ENCODE measurements at regions of chr10 and their contacts with region 1.

Region 1: GRCh38 chr10:121260376-121260775 is 337.9 kb downstream of the FGFR2 start:
- DNase-seq: no peak
- H3K4me3 ChIP-seq: no peak overlapping the region
- CTCF ChIP-seq: no peak

Region 2: DNA sequence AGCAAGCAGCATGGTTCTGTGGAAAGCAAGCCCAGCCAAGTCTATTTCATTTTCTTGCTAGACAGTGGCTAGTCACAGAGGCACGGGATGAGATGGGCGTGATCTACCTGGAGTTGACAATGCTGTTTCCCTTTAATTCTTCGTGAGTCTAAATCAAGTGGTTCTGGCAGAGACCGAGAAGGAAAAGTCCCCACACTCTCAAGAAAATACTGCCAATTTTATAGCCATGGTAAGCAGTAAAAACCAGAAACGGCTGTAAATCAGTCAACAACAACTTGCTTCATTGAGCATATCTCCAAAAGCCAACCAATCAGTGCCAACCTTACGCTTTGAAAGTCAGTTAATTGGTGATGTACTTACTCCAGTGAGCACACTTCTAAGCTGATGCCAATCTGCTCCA is 1144.4 kb before region 1 on chr10:
- in situ Hi-C with region 1: no loop called
- DNase-seq: no peak
- H3K4me3 ChIP-seq: no peak overlapping the region
- CTCF ChIP-seq: no peak

Region 3: GRCh38 chr10:121296881-121297585 is 36.7 kb after region 1 on chr10:
- in situ Hi-C with region 1: loop called (anchors 5 kb)
- DNase-seq: no peak
- H3K4me3 ChIP-seq: no peak overlapping the region
- CTCF ChIP-seq: no peak

Region 4: DNA sequence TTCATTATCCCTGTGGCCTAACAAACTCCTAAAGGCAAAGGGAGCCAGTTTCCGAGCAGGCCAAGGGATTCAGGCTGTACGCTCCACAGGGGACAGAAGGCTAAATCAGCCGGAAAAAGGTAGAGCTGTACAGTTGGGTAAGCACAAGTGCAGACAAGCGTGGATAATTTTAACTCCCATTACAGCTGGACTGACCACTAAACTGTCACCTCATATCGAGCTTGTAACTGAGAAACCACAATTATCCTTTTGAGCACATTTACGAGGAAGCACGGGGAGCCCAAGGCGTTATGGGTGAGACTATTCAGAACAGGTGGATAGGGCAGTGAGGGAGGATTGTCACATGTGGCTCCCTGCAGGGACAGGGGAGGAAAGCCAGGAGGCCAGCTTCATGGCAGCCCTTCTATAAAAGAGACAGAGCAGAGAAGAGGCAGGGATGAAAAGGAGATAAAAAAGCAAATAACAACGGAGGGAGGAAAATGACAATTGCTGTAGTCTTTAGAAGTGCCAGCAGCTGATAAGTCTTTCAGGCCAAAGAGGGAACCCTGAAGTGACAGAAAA is 49.9 kb after region 1 on chr10:
- in situ Hi-C with region 1: no loop called
- DNase-seq: peak; percentile 62
- H3K4me3 ChIP-seq: no peak overlapping the region
- CTCF ChIP-seq: no peak

Region 5: GRCh38 chr10:121340271-121340831 is 80.0 kb after region 1 on chr10:
- in situ Hi-C with region 1: no loop called
- DNase-seq: no peak
- H3K4me3 ChIP-seq: no peak overlapping the region
- CTCF ChIP-seq: no peak